CD8-positive, alpha-beta T cell (primary cell): ENCODE measurements at regions of chr13 and their contacts with region 1.

Region 1: DNA sequence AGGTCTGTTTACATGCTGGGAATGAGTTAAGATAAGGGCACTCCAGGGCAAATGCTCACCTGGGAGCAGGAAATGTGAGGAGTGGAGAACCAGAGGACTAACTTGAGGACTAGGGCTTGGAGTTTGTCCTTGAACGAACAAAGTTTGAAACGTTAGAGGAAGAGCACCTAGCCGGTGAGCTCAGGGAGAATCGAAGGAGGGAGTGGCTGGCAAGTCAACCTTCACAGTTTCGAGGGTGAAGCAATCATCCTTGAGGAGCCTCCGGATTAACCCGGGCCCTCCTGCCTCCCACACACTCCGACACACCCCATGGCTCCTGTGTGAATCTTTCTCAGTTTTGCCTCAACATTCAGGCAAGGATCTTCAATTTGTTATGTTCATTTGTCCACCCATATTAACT is 58.6 kb downstream of the LMO7 start:
- DNase-seq: no peak
- ATAC-seq: no peak
- H3K4me3 ChIP-seq: no peak overlapping the region
- H3K4me3 Mint-ChIP-seq: no peak overlapping the region
- H3K27ac ChIP-seq: no peak overlapping the region
- H3K27ac Mint-ChIP-seq: no peak overlapping the region
- H3K4me1 ChIP-seq: no peaks in the 10 kb centered on the region
- H3K4me1 Mint-ChIP-seq: no peaks in the 10 kb centered on the region
- H3K27me3 ChIP-seq: no peaks in the 10 kb centered on the region
- H3K27me3 Mint-ChIP-seq: no peaks in the 10 kb centered on the region
- CTCF ChIP-seq: no peak

Region 2: DNA sequence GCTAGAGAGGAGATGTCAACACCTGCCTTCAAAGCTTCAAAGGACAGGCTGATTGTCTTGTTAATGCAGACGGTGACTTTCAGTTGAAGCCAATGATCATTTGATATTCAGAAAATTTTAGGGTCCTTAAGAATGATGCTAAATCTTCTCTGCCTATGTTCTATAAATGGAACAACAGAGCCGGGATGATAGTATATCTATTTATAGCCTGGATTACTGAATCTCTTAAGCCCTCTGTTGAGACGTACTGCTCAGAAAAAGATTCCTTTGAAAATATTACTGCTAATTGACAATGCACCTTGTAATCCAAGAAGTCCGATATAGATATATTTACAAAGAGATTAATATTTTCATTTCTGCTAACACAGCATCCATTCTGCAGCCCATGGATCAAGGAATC is 94.4 kb before region 1 on chr13:
- CTCF ChIA-PET with region 1: no interaction called
- POLR2A ChIA-PET with region 1: no interaction called
- intact Hi-C with region 1: no loop called
- DNase-seq: no peak
- ATAC-seq: no peak
- H3K4me3 ChIP-seq: no peak overlapping the region
- H3K4me3 Mint-ChIP-seq: no peak overlapping the region
- H3K27ac ChIP-seq: no peak overlapping the region
- H3K27ac Mint-ChIP-seq: no peak overlapping the region
- H3K4me1 ChIP-seq: no peaks in the 10 kb centered on the region
- H3K4me1 Mint-ChIP-seq: no peaks in the 10 kb centered on the region
- H3K27me3 ChIP-seq: no peaks in the 10 kb centered on the region
- H3K27me3 Mint-ChIP-seq: no peaks in the 10 kb centered on the region
- CTCF ChIP-seq: no peak

Region 3: DNA sequence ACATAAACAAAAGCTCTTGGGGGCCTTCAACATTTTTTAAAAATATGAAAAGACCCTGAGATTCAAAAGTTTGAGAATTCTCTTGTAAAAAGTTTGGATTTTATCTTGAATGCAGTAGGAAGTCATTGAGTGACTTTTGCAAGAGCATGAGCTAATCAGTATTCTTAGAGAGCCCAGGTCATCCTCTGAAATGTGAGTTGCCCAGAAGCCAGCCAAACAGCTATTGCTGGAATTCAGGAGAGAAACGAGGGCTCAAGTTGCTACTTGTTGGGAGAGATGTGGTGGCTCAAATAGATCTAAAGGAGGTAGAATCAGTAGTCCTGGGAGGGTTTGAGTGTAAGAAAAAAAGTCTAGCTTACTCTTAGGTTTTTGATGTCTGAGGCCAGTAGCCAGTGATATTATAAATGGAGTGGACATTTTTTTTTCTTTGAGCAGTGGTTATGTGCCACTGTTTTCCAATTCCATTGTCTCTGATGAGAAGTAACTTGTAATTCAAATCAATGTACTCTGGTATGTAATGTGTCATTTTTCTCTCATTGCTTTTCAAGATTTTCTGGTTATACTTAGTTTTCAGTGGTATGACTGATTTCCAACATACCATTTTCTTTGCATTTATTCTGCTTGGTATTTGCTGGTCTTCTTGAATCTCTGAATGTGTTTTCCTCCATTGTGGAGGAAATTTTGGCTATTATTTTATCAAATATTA is 27.9 kb before region 1 on chr13:
- CTCF ChIA-PET with region 1: interaction called, 17 read pairs
- POLR2A ChIA-PET with region 1: no interaction called
- intact Hi-C with region 1: no loop called
- DNase-seq: no peak
- ATAC-seq: no peak
- H3K4me3 ChIP-seq: no peak overlapping the region
- H3K4me3 Mint-ChIP-seq: no peak overlapping the region
- H3K27ac ChIP-seq: no peak overlapping the region
- H3K27ac Mint-ChIP-seq: no peak overlapping the region
- H3K4me1 ChIP-seq: no peaks in the 10 kb centered on the region
- H3K4me1 Mint-ChIP-seq: no peaks in the 10 kb centered on the region
- H3K27me3 ChIP-seq: no peaks in the 10 kb centered on the region
- H3K27me3 Mint-ChIP-seq: no peaks in the 10 kb centered on the region
- CTCF ChIP-seq: no peak

Region 4: GRCh38 chr13:75715601-75716523 is 21.1 kb after region 1 on chr13:
- CTCF ChIA-PET with region 1: interaction called, 14 read pairs
- POLR2A ChIA-PET with region 1: no interaction called
- intact Hi-C with region 1: no loop called
- DNase-seq: no peak
- ATAC-seq: no peak
- H3K4me3 ChIP-seq: no peak overlapping the region
- H3K4me3 Mint-ChIP-seq: no peak overlapping the region
- H3K27ac ChIP-seq: no peak overlapping the region
- H3K27ac Mint-ChIP-seq: no peak overlapping the region
- H3K4me1 ChIP-seq: no peaks in the 10 kb centered on the region
- H3K4me1 Mint-ChIP-seq: peaks cover 3% of the 10 kb centered on the region
- H3K27me3 ChIP-seq: no peaks in the 10 kb centered on the region
- H3K27me3 Mint-ChIP-seq: no peaks in the 10 kb centered on the region
- CTCF ChIP-seq: no peak

Region 5: DNA sequence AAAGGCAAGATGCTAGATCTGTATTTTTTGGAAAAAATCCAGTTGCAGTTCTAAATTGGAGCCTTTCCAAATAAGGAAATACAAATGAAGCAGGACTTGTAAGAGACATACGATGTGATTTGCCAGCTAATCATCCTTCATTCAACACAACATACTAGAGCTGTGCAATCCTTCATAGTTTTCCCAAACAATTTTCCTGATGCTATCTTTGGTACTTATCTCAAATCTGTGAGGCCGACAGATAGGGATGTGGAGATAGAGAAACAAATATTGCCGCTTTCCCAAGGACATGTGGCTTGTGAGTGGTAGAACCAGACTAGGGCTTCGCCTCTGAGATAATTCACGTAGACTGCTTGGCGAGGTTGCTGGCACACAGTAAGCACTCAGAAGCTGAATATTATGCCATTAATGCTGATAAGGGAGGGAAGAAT is 118.0 kb after region 1 on chr13:
- CTCF ChIA-PET with region 1: interaction called, 11 read pairs
- POLR2A ChIA-PET with region 1: no interaction called
- intact Hi-C with region 1: loop called in 1 of 2 experiments (anchors 5 kb)
- DNase-seq: no peak
- ATAC-seq: no peak
- H3K4me3 ChIP-seq: no peak overlapping the region
- H3K4me3 Mint-ChIP-seq: no peak overlapping the region
- H3K27ac ChIP-seq: no peak overlapping the region
- H3K27ac Mint-ChIP-seq: no peak overlapping the region
- H3K4me1 ChIP-seq: no peaks in the 10 kb centered on the region
- H3K4me1 Mint-ChIP-seq: no peaks in the 10 kb centered on the region
- H3K27me3 ChIP-seq: no peaks in the 10 kb centered on the region
- H3K27me3 Mint-ChIP-seq: no peaks in the 10 kb centered on the region
- CTCF ChIP-seq: no peak

Region 6: GRCh38 chr13:75855847-75856246 is 161.1 kb after region 1 on chr13:
- CTCF ChIA-PET with region 1: interaction called, 11 read pairs
- POLR2A ChIA-PET with region 1: no interaction called
- intact Hi-C with region 1: no loop called
- DNase-seq: no peak
- ATAC-seq: no peak
- H3K4me3 ChIP-seq: no peak overlapping the region
- H3K4me3 Mint-ChIP-seq: no peak overlapping the region
- H3K27ac ChIP-seq: no peak overlapping the region
- H3K27ac Mint-ChIP-seq: no peak overlapping the region
- H3K4me1 ChIP-seq: no peaks in the 10 kb centered on the region
- H3K4me1 Mint-ChIP-seq: no peaks in the 10 kb centered on the region
- H3K27me3 ChIP-seq: no peaks in the 10 kb centered on the region
- H3K27me3 Mint-ChIP-seq: no peaks in the 10 kb centered on the region
- CTCF ChIP-seq: no peak

Region 7: DNA sequence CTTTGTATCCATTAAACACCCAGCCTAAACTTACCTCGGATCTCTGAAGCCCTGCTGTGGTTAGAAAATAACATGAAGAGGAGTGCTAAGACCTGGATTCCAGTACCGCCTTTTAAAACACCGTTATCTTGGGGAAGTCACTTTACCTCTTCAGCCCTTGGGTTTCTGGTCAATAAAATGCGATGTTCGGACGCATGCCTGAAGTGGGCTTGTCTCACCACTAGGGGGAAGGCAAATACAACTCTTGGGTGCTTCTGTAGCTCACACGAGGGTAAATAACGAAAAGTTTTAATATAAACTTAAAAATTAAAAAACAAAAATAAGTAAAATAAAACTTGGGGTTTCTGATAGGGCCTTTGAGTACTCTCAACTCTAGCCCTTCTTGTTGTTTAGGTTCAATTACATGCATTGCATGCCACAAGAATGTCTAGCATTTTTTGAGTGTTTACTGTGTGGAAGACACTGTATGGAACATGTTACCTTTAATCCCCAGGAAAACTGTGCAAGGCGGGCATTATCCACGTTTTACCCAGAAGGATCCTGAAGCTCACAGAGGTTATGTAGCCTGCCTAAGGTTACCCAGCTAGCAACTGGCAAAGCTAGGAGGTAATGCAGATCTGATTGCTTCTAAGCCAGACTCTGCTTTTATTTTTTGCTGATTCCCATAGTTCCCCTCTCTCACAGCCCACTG is 181.8 kb after region 1 on chr13:
- CTCF ChIA-PET with region 1: interaction called, 47 read pairs
- POLR2A ChIA-PET with region 1: no interaction called
- intact Hi-C with region 1: no loop called
- DNase-seq: peak; percentile 8 to 69 (median 46)
- ATAC-seq: peak; percentile 95
- H3K4me3 ChIP-seq: no peak overlapping the region
- H3K4me3 Mint-ChIP-seq: peak overlapping the region; percentile 52
- H3K27ac ChIP-seq: no peak overlapping the region
- H3K27ac Mint-ChIP-seq: no peak overlapping the region
- H3K4me1 ChIP-seq: no peaks in the 10 kb centered on the region
- H3K4me1 Mint-ChIP-seq: peaks cover 17% of the 10 kb centered on the region
- H3K27me3 ChIP-seq: no peaks in the 10 kb centered on the region
- H3K27me3 Mint-ChIP-seq: peaks cover 2% of the 10 kb centered on the region
- CTCF ChIP-seq: peak; percentile 87

Region 8: DNA sequence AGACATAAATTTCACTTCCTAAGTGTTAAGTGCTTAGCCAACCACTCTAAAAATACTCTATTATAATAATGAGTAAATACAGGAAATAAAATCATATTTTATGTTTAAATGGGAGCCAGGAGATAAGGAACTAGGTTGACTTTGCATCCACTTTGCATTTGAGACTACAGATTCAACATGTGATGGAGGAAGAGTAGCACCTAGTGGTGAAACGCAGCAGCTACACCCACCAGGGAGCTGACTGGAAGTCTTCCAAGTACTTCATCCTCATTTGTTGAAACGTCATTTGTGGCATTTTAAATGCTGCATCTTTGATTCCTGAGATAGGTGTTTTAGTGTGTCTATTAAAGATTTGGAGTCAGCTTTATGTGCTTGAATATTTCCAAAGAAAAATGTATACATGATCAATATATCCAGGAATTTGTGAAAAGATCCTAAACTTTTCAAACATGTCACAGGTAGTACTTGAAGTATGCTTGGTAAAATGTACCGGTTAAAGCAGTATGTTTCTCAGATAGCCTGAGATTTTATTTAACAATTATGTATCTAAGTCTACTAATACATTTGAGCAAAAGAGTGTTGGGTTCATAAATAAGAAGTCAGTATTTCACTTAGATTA is 1208.9 kb after region 1 on chr13:
- CTCF ChIA-PET with region 1: interaction called, 23 read pairs
- POLR2A ChIA-PET with region 1: no interaction called
- intact Hi-C with region 1: loop called (anchors 1 kb)
- DNase-seq: peak; percentile 38 to 78 (median 71)
- ATAC-seq: peak; percentile 92
- H3K4me3 ChIP-seq: no peak overlapping the region
- H3K4me3 Mint-ChIP-seq: no peak overlapping the region
- H3K27ac ChIP-seq: no peak overlapping the region
- H3K27ac Mint-ChIP-seq: no peak overlapping the region
- H3K4me1 ChIP-seq: no peaks in the 10 kb centered on the region
- H3K4me1 Mint-ChIP-seq: no peaks in the 10 kb centered on the region
- H3K27me3 ChIP-seq: no peaks in the 10 kb centered on the region
- H3K27me3 Mint-ChIP-seq: peaks cover 14% of the 10 kb centered on the region
- CTCF ChIP-seq: peak; percentile 99